PC-3 (cell line): ENCODE measurements at regions of chr2 and their contacts with region 1.

Region 1: GRCh38 chr2:197576631-197577030 is 60.8 kb downstream of the MOB4 start:
- DNase-seq: peak; percentile 77
- ATAC-seq: peak; percentile 94
- H3K4me3 ChIP-seq: no peak overlapping the region
- H3K27ac ChIP-seq: 0 out of 2 replicates have a peak overlapping the region, but pooled peaks have one; percentile 12
- H3K4me1 ChIP-seq: peaks cover 16% of the 10 kb centered on the region
- H3K27me3 ChIP-seq: no peaks in the 10 kb centered on the region
- CTCF ChIP-seq: no peak

Region 2: GRCh38 chr2:197268786-197269584 is 307.6 kb before region 1 on chr2:
- CTCF ChIA-PET with region 1: no interaction called
- POLR2A ChIA-PET with region 1: no interaction called
- intact Hi-C with region 1: no loop called
- DNase-seq: no peak
- ATAC-seq: no peak
- H3K4me3 ChIP-seq: no peak overlapping the region
- H3K27ac ChIP-seq: no peak overlapping the region
- H3K4me1 ChIP-seq: no peaks in the 10 kb centered on the region
- H3K27me3 ChIP-seq: no peaks in the 10 kb centered on the region
- CTCF ChIP-seq: no peak

Region 3: GRCh38 chr2:197515739-197516392 is 60.8 kb before region 1 on chr2 and contains the start of gene MOB4:
- CTCF ChIA-PET with region 1: no interaction called
- POLR2A ChIA-PET with region 1: no interaction called
- intact Hi-C with region 1: loop called (anchors 5 kb)
- DNase-seq: peak; percentile 95
- ATAC-seq: peak; percentile 92
- H3K4me3 ChIP-seq: peak within 1 kb of the TSS; percentile 89
- H3K27ac ChIP-seq: peak within 1 kb of the TSS; percentile 48
- H3K4me1 ChIP-seq: peaks cover 17% of the 10 kb centered on the region
- H3K27me3 ChIP-seq: no peaks in the 10 kb centered on the region
- CTCF ChIP-seq: no peak
- total RNA-seq, gene MOB4: 16.8 and 24.9 TPM in 2 replicates

Region 4: DNA sequence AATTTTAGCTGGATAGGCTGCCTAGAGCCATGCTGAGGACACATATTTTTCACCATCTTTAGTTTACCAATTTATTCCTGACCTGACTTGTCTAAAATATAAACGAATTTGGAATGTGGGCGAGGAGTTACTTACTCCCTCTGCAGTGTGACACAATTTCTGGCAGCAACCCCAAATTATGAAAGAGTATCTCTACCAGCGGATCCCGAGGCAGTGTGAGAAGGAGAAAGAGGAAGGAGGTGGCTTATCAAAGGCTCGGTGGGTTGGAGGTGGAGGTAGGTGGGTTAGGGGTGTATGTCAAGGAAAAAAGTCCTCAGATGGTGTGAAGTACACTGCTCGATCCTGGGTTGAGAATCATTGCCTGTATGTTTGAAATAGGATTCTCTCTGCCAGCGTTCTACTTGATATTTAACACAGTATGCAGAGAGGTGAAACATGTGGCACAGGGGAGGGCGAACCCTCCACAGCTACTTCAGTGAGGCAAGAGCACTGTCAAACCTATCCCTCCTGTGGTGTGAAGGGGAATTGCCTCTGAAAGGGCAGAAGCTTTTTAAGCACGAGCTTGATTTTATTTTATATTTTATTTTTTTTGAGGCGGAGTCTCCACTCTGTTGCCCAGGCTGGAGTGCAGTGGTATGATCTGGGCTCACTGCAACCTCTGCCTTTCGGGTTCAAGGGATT is 22.8 kb after region 1 on chr2:
- CTCF ChIA-PET with region 1: interaction called, 20 read pairs
- POLR2A ChIA-PET with region 1: no interaction called
- intact Hi-C with region 1: no loop called
- DNase-seq: peak; percentile 69
- ATAC-seq: peak; percentile 91
- H3K4me3 ChIP-seq: no peak overlapping the region
- H3K27ac ChIP-seq: no peak overlapping the region
- H3K4me1 ChIP-seq: no peaks in the 10 kb centered on the region
- H3K27me3 ChIP-seq: no peaks in the 10 kb centered on the region
- CTCF ChIP-seq: peak; percentile 56